PC-9 (cell line): ENCODE measurements at regions of chr2 and their contacts with region 1.

Region 1: GRCh38 chr2:227238238-227239237 is 74.1 kb downstream of the COL4A3 start:
- DNase-seq: peak; percentile 46 to 65
- H3K4me3 ChIP-seq: no peak overlapping the region
- H3K27ac ChIP-seq: no peak overlapping the region
- H3K4me1 ChIP-seq: no peaks in the 10 kb centered on the region
- H3K27me3 ChIP-seq: no peaks in the 10 kb centered on the region
- CTCF ChIP-seq: peak; percentile 97

Region 2: GRCh38 chr2:225668606-225669266 is 1569.8 kb before region 1 on chr2:
- CTCF ChIA-PET with region 1: no interaction called
- POLR2A ChIA-PET with region 1: no interaction called
- intact Hi-C with region 1: loop called (anchors 5 kb)
- DNase-seq: peak; percentile 38 to 65
- H3K4me3 ChIP-seq: no peak overlapping the region
- H3K27ac ChIP-seq: no peak overlapping the region
- H3K4me1 ChIP-seq: no peaks in the 10 kb centered on the region
- H3K27me3 ChIP-seq: no peaks in the 10 kb centered on the region
- CTCF ChIP-seq: peak; percentile 97

Region 3: DNA sequence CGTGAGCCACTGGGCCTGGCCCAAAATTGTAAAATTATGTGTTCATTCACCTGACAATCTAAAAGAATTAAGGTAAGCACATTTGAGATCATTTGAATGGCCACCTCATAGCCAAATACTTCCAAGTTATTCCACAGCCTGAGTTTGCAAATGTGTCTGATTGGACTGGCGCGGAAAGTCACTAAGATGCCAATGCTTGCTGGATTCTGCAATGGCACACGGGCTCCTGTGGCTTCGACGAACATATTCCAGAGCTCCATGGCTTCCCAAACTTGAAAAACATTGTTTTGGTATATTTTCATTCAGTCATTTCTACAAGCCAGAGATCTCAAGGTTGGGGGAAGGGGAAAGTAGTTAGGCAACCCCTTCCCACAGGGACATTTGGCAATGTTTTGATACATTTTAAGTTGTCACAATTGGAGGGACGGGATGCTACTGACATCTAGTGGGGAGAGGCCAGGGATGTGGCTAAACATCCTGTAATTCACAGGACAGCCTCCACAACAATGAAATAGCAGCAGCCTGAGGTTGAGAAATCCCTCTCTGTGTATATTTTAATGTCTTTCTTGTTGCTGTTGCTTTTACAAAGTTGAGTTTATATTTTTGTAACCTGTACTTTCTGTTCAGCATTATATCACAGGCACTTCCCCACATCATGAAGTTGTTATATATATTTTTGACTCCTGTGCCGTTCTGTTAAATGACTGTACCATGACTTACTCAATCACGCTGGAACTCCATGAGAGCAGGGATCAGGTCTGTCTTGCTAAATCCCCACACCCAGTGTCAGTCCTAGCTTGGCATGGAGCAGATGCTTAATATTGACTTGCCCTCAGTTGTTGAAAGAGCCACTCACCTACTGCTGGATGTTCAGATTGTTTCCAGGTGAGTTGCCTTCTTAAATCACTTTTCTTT is 131.4 kb before region 1 on chr2:
- CTCF ChIA-PET with region 1: no interaction called
- POLR2A ChIA-PET with region 1: no interaction called
- intact Hi-C with region 1: no loop called
- DNase-seq: peak; percentile 37 to 50
- H3K4me3 ChIP-seq: no peak overlapping the region
- H3K27ac ChIP-seq: no peak overlapping the region
- H3K4me1 ChIP-seq: no peaks in the 10 kb centered on the region
- H3K27me3 ChIP-seq: no peaks in the 10 kb centered on the region
- CTCF ChIP-seq: peak; percentile 81

Region 4: GRCh38 chr2:227163998-227164762 is 74.4 kb before region 1 on chr2 and contains the starts of genes COL4A3 and COL4A4:
- CTCF ChIA-PET with region 1: interaction called, 3 read pairs
- POLR2A ChIA-PET with region 1: no interaction called
- intact Hi-C with region 1: loop called (anchors 2 kb)
- DNase-seq: peak in 1 of 2 experiments; percentile 64
- H3K4me3 ChIP-seq: peak within 1 kb of the TSS; percentile 75
- H3K27ac ChIP-seq: no peak within 1 kb of the TSS
- H3K4me1 ChIP-seq: peaks cover 9% of the 10 kb centered on the region; the same call in 1 of the 2 replicates
- H3K27me3 ChIP-seq: no peaks in the 10 kb centered on the region
- CTCF ChIP-seq: no peak
- total RNA-seq, gene COL4A3: 2.2 and 3.5 TPM in 2 replicates
- total RNA-seq, gene COL4A4: 5.6 and 6.0 TPM in 2 replicates

Region 5: GRCh38 chr2:227324995-227325838 is 86.7 kb after region 1 on chr2 and contains the start of gene MFF:
- CTCF ChIA-PET with region 1: no interaction called
- POLR2A ChIA-PET with region 1: no interaction called
- intact Hi-C with region 1: loop called (anchors 5 kb)
- DNase-seq: peak; percentile 80 to 86
- H3K4me3 ChIP-seq: peak within 1 kb of the TSS; percentile 98
- H3K27ac ChIP-seq: peak within 1 kb of the TSS; percentile 83
- H3K4me1 ChIP-seq: peaks cover 25% of the 10 kb centered on the region
- H3K27me3 ChIP-seq: no peaks in the 10 kb centered on the region
- CTCF ChIP-seq: peak; percentile 43; the same call in 1 of the 2 replicates
- total RNA-seq, gene MFF: 141 and 144 TPM in 2 replicates

Region 6: DNA sequence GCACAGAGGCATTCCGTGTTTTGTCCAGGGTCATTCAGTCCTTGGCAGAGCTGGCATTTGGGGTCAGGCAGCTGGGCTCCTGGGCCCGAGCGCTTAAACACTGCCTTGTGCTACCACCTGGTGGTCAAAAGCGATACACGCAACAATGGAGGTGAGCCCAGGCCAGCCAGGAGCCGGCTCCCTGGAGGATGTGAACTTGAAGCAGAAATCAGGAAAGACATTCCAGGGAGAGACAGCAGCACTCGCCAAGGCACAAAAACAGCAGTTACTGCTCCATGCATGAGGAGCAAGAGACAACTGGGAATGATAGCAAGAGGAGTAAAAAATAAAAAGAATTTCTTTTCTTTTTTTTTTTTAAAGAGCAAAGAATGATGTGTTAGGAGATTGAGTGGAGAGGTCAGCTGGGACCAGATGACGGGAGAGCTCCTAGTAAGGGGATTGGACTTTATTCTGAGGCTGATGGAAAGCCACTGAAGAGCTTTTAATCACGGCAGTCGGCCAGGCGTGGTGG is 527.9 kb after region 1 on chr2:
- CTCF ChIA-PET with region 1: interaction called, 8 read pairs
- POLR2A ChIA-PET with region 1: no interaction called
- intact Hi-C with region 1: loop called (anchors 2 kb)
- DNase-seq: peak; percentile 57 to 79
- H3K4me3 ChIP-seq: no peak overlapping the region
- H3K27ac ChIP-seq: no peak overlapping the region
- H3K4me1 ChIP-seq: peaks cover 12% of the 10 kb centered on the region
- H3K27me3 ChIP-seq: no peaks in the 10 kb centered on the region
- CTCF ChIP-seq: peak; percentile 93